ENCODE measurements at regions of chr11 and their contacts with region 1.

Region 1: GRCh38 chr11:22677153-22677903 is 10.9 kb downstream of the GAS2 start:
- DNase-seq: no peak
- ATAC-seq: peak; percentile 55
- H3K4me3 ChIP-seq: no peak overlapping the region
- H3K27ac ChIP-seq: no peak overlapping the region; the same call in 1 of the 2 replicates
- H3K4me1 ChIP-seq: no peaks in the 10 kb centered on the region
- H3K27me3 ChIP-seq: no peaks in the 10 kb centered on the region
- CTCF ChIP-seq: no peak
- EP300 ChIP-seq: no peak
- POLR2A ChIP-seq: no peak
- RAD21 ChIP-seq: no peak

Region 2: DNA sequence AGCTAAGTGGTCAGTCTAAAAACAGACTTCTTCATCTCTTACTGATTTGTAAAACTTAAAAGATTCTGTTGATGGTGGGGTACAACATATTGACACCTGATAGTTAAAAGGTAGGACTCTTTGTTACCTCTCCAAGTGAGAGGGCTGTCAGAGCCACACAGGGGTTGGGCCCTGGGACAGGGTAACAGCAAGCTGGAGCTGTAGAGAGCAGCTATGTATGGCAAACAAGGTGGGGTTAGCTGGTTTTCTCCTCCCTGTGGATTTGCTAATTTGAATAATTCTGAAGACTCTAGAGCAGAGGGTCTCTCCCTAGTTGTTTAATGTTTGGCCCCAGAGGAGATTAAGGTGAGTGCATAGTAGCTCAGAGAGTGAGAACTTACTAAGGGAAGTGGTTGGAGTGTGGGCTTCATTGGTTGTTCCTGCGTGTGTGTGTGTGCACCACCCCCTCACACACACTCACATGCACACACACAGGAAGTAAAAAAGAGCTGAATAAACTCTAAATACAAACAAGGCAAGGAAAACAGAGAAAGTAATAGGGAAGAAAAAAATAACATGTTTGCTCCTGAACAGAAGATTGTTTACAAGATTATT is 20.1 kb before region 1 on chr11:
- CTCF ChIA-PET with region 1: interaction called, 10 read pairs
- POLR2A ChIA-PET with region 1: interaction called, 7 read pairs
- RAD21 ChIA-PET with region 1: interaction called, 41 read pairs
- SMC1A ChIA-PET with region 1: interaction called, 14 read pairs
- in situ Hi-C with region 1: no loop called
- intact Hi-C with region 1: no loop called
- DNase-seq: no peak
- ATAC-seq: peak; percentile 92
- H3K4me3 ChIP-seq: no peak overlapping the region
- H3K27ac ChIP-seq: peak overlapping the region; percentile 42; the same call in 1 of the 2 replicates
- H3K4me1 ChIP-seq: peaks cover 6% of the 10 kb centered on the region
- H3K27me3 ChIP-seq: no peaks in the 10 kb centered on the region
- CTCF ChIP-seq: no peak
- EP300 ChIP-seq: peak in 1 of 2 experiments; percentile 46; a peak in 2 of 4 replicates
- POLR2A ChIP-seq: no peak
- RAD21 ChIP-seq: no peak

Region 3: DNA sequence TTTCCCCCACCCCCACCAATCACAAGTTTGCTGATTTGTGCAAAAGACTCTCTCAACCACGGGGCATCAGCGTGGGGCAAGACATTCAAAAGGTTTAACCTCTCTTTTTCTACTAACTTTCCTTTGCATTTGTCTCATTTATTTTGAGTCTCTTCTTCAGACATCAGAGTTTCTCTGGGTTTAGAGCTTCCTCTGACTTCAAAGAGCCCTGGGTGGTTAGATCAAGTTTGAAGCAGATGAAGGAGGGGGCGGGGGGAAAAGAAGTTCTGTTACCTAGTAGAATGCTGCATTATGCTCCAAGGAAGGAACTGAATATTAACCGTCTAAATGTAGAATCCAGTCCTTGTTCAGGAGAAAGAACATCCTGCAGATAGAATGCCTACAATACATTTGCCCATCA is 13.5 kb after region 1 on chr11:
- CTCF ChIA-PET with region 1: interaction called, 9 read pairs
- POLR2A ChIA-PET with region 1: interaction called, 60 read pairs
- RAD21 ChIA-PET with region 1: interaction called, 101 read pairs
- SMC1A ChIA-PET with region 1: interaction called, 87 read pairs
- in situ Hi-C with region 1: no loop called
- intact Hi-C with region 1: no loop called
- DNase-seq: no peak
- ATAC-seq: peak; percentile 32
- H3K4me3 ChIP-seq: no peak overlapping the region
- H3K27ac ChIP-seq: no peak overlapping the region
- H3K4me1 ChIP-seq: no peaks in the 10 kb centered on the region
- H3K27me3 ChIP-seq: no peaks in the 10 kb centered on the region
- CTCF ChIP-seq: no peak
- EP300 ChIP-seq: no peak
- POLR2A ChIP-seq: no peak
- RAD21 ChIP-seq: no peak

Region 4: DNA sequence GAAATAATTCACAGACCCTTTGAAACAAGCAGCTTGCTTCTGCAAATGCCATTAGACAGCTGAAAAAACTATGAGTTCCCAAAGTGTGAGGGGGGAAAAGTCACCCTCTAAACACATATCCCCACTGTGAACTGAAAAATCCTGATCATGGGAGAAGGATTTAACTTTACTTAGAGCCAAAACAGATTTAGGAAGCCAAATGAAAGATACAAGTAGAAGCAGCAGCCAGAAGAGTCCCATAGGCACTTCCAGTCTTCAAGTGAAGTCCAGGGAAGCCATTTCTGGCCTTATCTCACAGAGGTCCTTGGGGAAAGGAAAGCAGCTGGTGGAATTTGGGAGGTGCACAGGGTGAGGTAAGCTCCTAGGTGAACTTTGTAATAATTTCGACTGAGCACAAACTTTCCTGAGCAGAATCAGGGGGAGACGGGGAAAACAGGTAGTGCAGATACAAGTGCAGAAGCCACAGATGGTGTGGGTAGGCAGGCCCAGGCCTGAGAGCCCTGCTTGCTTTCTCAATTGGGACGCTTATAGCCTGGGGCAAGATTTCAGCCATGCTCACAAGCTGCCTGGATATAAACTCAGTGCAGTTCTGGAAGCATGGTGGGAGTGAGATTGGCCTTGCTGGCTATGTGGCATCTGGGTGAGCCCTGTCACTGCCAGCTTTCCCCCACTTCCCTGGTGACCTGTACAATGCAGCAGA is 33.9 kb after region 1 on chr11:
- CTCF ChIA-PET with region 1: interaction called, 4 read pairs
- POLR2A ChIA-PET with region 1: no interaction called
- RAD21 ChIA-PET with region 1: interaction called, 3 read pairs
- SMC1A ChIA-PET with region 1: interaction called, 117 read pairs
- in situ Hi-C with region 1: no loop called
- intact Hi-C with region 1: no loop called
- DNase-seq: no peak
- ATAC-seq: peak; percentile 69
- H3K4me3 ChIP-seq: no peak overlapping the region
- H3K27ac ChIP-seq: no peak overlapping the region
- H3K4me1 ChIP-seq: no peaks in the 10 kb centered on the region
- H3K27me3 ChIP-seq: no peaks in the 10 kb centered on the region
- CTCF ChIP-seq: no peak
- EP300 ChIP-seq: no peak
- POLR2A ChIP-seq: no peak
- RAD21 ChIP-seq: no peak

Region 5: DNA sequence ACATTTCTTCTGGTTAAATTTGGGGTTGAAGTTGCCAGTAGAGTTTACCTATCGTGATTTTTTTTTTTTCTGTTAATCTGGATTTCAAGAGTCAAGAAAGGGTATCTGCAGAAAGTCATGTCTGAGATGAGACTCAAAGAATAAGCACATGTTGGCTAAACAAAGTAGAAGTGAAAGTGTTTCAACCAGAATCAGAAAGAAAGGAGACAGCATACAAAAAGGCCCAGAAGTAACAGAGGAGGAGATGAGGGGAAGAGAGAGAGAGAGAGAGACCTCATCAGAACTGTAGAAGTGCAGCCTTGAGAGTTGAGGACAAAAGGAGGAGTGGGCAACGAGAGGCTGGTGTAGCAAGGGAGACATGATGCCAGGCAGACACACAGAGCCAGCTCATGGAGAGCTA is 97.4 kb after region 1 on chr11:
- CTCF ChIA-PET with region 1: interaction called, 83 read pairs
- POLR2A ChIA-PET with region 1: interaction called, 15 read pairs
- RAD21 ChIA-PET with region 1: interaction called, 81 read pairs
- SMC1A ChIA-PET with region 1: interaction called, 251 read pairs
- in situ Hi-C with region 1: no loop called
- intact Hi-C with region 1: no loop called
- DNase-seq: no peak
- ATAC-seq: peak; percentile 64
- H3K4me3 ChIP-seq: 0 out of 2 replicates have a peak overlapping the region, but pooled peaks have one; percentile 26
- H3K27ac ChIP-seq: peak overlapping the region; percentile 45
- H3K4me1 ChIP-seq: peaks cover 3% of the 10 kb centered on the region; the same call in 1 of the 2 replicates
- H3K27me3 ChIP-seq: no peaks in the 10 kb centered on the region
- CTCF ChIP-seq: no peak
- EP300 ChIP-seq: no peak
- POLR2A ChIP-seq: no peak
- RAD21 ChIP-seq: no peak

Region 6: GRCh38 chr11:22829231-22830081 is 152.1 kb after region 1 on chr11 and contains the start of gene SVIP:
- CTCF ChIA-PET with region 1: interaction called, 4 read pairs
- POLR2A ChIA-PET with region 1: interaction called, 7 read pairs
- RAD21 ChIA-PET with region 1: interaction called, 6 read pairs
- SMC1A ChIA-PET with region 1: interaction called, 9 read pairs
- in situ Hi-C with region 1: no loop called
- intact Hi-C with region 1: loop called (anchors 2 kb)
- DNase-seq: peak; percentile 69
- ATAC-seq: peak; percentile 94
- H3K4me3 ChIP-seq: peak within 1 kb of the TSS; percentile 87
- H3K27ac ChIP-seq: peak within 1 kb of the TSS; percentile 59
- H3K4me1 ChIP-seq: no peaks in the 10 kb centered on the region
- H3K27me3 ChIP-seq: no peaks in the 10 kb centered on the region
- CTCF ChIP-seq: peak; percentile 76 to 92 (median 89)
- EP300 ChIP-seq: no peak
- POLR2A ChIP-seq: peak; percentile 91
- RAD21 ChIP-seq: peak; percentile 56
- polyA plus RNA-seq, gene SVIP: 59.0 to 78.0 TPM

Region 7: GRCh38 chr11:23006730-23007129 is 329.4 kb after region 1 on chr11:
- CTCF ChIA-PET with region 1: no interaction called
- POLR2A ChIA-PET with region 1: no interaction called
- RAD21 ChIA-PET with region 1: no interaction called
- SMC1A ChIA-PET with region 1: no interaction called
- in situ Hi-C with region 1: no loop called
- intact Hi-C with region 1: no loop called
- DNase-seq: no peak
- ATAC-seq: no peak
- H3K4me3 ChIP-seq: no peak overlapping the region
- H3K27ac ChIP-seq: no peak overlapping the region
- H3K4me1 ChIP-seq: no peaks in the 10 kb centered on the region
- H3K27me3 ChIP-seq: no peaks in the 10 kb centered on the region
- CTCF ChIP-seq: no peak
- EP300 ChIP-seq: no peak
- POLR2A ChIP-seq: no peak
- RAD21 ChIP-seq: no peak